ENCODE measurements at regions of chr10 and their contacts with region 1.

Region 1: GRCh38 chr10:91251430-91252056 is 31.1 kb downstream of the PCGF5 start:
- DNase-seq: peak; percentile 55 to 80 (median 72)
- H3K4me3 ChIP-seq: no peak overlapping the region
- H3K27ac ChIP-seq: no peak overlapping the region
- H3K4me1 ChIP-seq: no peaks in the 10 kb centered on the region
- H3K27me3 ChIP-seq: no peaks in the 10 kb centered on the region

Region 2: GRCh38 chr10:90879062-90879461 is 372.5 kb before region 1 on chr10:
- CTCF ChIA-PET with region 1: interaction called, 13 read pairs
- POLR2A ChIA-PET with region 1: no interaction called
- DNase-seq: no peak
- H3K4me3 ChIP-seq: no peak overlapping the region
- H3K27ac ChIP-seq: no peak overlapping the region
- H3K4me1 ChIP-seq: no peaks in the 10 kb centered on the region
- H3K27me3 ChIP-seq: no peaks in the 10 kb centered on the region

Region 3: GRCh38 chr10:90912174-90912573 is 339.4 kb before region 1 on chr10:
- CTCF ChIA-PET with region 1: interaction called, 22 read pairs
- POLR2A ChIA-PET with region 1: no interaction called
- DNase-seq: no peak
- H3K4me3 ChIP-seq: no peak overlapping the region
- H3K27ac ChIP-seq: no peak overlapping the region
- H3K4me1 ChIP-seq: no peaks in the 10 kb centered on the region
- H3K27me3 ChIP-seq: peaks cover 0 to 3% (median 0%) of the 10 kb centered on the region in 5 experiments

Region 4: DNA sequence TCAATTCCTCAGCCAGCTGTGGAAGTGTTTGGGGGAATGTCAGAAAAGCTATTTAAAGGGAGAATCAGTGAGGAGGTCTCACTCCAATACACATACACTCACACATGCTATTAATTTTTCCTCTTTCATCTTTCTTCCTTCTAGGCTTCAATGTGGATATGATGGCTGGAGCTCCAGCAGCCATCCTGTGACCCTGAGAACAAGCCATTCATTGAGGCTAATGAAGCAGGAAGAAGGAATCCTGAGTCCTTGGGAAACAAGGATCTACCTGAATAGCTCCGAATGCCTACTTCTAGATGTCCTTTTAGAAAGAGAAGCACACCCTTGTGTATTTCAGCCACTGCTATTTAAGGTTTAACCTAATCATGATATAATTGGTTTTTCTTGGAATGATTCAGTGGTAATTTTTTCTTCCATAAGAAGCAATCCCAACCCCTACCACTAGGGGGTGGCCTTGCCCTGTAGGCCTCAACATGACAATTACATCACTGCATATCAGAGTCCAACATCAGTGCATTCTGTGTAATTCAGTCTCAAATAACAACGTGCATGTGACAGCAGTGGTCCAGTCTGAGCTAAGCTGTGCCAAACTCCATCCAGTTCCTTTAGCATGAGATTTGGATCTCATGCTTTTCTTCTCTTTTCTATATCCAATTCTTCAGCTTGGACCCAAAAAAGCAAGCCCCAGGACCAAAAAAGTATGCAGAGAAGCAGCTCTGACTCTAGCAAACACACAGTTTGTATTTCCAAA is 245.4 kb before region 1 on chr10:
- CTCF ChIA-PET with region 1: interaction called, 53 read pairs
- POLR2A ChIA-PET with region 1: no interaction called
- DNase-seq: peak; percentile 65 to 79 (median 78)
- H3K4me3 ChIP-seq: no peak overlapping the region
- H3K27ac ChIP-seq: no peak overlapping the region
- H3K4me1 ChIP-seq: no peaks in the 10 kb centered on the region
- H3K27me3 ChIP-seq: no peaks in the 10 kb centered on the region

Region 5: GRCh38 chr10:91088300-91089140 is 163.0 kb before region 1 on chr10:
- CTCF ChIA-PET with region 1: interaction called, 69 read pairs
- POLR2A ChIA-PET with region 1: interaction called, 3 read pairs
- DNase-seq: peak; percentile 19 to 59 (median 53)
- H3K4me3 ChIP-seq: no peak overlapping the region
- H3K27ac ChIP-seq: no peak overlapping the region
- H3K4me1 ChIP-seq: no peaks in the 10 kb centered on the region
- H3K27me3 ChIP-seq: no peaks in the 10 kb centered on the region

Region 6: GRCh38 chr10:91238191-91238590 is 13.4 kb before region 1 on chr10:
- CTCF ChIA-PET with region 1: interaction called, 31 read pairs
- POLR2A ChIA-PET with region 1: no interaction called
- DNase-seq: no peak
- H3K4me3 ChIP-seq: no peak overlapping the region
- H3K27ac ChIP-seq: no peak overlapping the region
- H3K4me1 ChIP-seq: no peaks in the 10 kb centered on the region
- H3K27me3 ChIP-seq: no peaks in the 10 kb centered on the region